ENCODE measurements at regions of chr6 and their contacts with region 1.

Region 1: DNA sequence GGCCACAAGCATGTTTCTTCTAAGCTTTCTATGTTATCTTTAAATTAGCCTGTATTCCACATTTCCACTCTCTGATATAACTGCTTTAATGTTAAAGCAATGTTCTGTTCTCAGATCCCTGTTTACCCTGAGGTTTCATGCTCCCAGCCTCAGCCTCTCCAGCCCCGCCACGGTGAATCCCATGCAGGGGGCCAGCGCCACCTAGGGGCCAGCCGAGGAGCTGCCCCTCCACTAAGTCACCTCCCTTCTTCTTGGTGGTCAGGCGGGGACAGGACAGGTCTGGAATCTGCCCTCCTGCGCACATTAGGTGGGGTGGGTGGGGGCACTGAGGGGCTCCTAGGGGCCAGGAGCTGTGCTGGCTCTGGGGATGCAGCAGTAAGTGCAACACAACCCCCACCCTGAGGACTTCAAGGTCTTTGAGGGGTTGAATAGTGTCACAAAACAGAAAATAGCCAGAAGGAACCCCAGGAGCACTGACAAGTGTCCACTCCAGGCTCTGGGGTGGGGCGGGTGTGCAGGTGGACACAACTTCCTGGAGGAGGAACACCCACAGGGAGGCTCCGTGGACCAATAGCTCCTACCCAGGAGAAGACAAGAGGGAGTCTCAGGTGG is 61.6 kb downstream of the RAB44 start:
- DNase-seq: peak; percentile 39 to 88 (median 63)
- ATAC-seq: peak; percentile 67
- H3K4me3 ChIP-seq: no peak overlapping the region
- H3K4me3 Mint-ChIP-seq: no peak overlapping the region
- H3K27ac ChIP-seq: no peak overlapping the region
- H3K27ac Mint-ChIP-seq: peak overlapping the region in 3 of 9 donors; percentile 3 to 43 (median 25)
- H3K4me1 ChIP-seq: peaks cover 16 to 36% of the 10 kb centered on the region in 2 donors
- H3K4me1 Mint-ChIP-seq: peaks cover 17 to 51% (median 33%) of the 10 kb centered on the region in 7 donors
- H3K27me3 ChIP-seq: no peaks in the 10 kb centered on the region
- H3K27me3 Mint-ChIP-seq: peaks cover 0 to 2% (median 0%) of the 10 kb centered on the region in 5 donors

Region 2: DNA sequence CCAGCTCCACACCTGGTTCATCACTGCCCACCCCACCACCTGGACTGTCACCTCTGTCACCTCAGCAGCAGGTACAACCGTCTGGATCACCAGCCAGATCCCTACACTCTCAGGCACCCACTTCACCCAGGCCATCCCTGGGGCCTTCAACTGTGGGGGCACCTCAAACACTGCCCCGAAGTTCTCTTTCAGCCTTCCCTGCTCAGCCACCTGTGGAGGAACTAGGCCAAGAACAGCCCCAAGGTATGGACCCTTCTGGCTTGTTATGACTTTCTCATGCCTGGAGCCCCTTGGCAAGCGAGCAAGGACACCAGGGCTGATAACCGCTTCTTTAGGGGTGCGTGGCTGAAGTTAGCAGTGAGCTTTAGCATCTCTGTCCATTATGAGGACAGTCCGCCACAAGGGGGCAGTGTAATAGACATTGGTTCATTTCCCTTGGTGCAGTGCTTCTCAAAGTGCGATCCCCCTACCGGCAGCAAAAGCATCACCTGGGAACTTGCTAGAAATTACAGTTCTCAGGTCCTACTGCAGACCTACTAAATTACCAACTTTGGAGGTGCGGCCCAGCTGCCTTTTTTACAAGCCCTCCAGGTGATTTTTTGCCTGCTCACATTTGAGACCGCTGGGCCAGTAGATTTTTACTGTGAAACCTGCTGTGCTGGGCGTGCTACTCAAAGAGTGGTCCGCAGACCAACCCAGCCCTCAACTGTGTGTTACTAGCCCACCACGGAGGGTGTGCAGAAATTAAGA is 456.9 kb before region 1 on chr6:
- CTCF ChIA-PET with region 1: no interaction called
- POLR2A ChIA-PET with region 1: no interaction called
- intact Hi-C with region 1: loop called in 1 of 2 experiments (anchors 2 kb)
- DNase-seq: peak; percentile 74 to 92 (median 88)
- ATAC-seq: peak; percentile 100
- H3K4me3 ChIP-seq: no peak overlapping the region
- H3K4me3 Mint-ChIP-seq: no peak overlapping the region
- H3K27ac ChIP-seq: no peak overlapping the region
- H3K27ac Mint-ChIP-seq: peak overlapping the region in 4 of 9 donors; percentile 29 to 59 (median 48)
- H3K4me1 ChIP-seq: no peaks in the 10 kb centered on the region
- H3K4me1 Mint-ChIP-seq: peaks cover 0 to 8% (median 6%) of the 10 kb centered on the region in 7 donors
- H3K27me3 ChIP-seq: no peaks in the 10 kb centered on the region
- H3K27me3 Mint-ChIP-seq: peaks cover 0 to 29% (median 5%) of the 10 kb centered on the region in 5 donors

Region 3: DNA sequence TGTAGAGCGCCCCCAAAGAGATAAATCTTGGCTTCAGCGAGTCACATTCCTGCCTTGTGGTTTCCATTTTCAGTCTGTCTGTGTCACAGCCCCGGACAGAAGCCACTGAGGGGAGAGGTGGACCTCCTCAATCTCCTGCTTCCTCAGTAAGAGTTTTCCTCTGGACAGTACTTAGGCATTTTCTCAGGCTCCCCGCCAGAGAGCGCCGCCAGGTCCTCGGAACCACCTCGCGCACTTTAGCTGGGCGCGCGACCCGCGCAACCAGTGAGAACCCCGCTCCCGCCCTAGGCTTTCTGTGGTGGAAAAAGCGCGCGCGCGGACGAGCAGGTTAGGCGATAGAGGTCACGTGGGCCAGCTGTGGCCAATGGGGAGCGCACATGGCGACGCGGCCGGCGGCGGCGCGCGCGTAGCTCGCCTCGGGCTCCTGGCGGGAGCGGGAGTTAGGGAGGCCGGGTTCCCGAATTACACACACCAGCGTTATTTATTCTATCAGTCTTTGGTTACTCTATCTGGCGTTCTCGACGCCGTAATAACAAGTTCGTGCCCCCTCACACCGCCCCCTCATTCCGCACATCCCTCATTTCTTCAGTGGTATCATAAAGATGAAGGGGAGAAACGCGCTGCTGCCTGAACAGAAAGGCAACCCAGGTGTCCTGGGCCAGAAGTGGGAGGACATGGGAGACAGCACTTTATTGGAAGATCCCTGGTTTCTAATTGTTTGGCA is 336.0 kb before region 1 on chr6:
- CTCF ChIA-PET with region 1: interaction called, 3 read pairs
- POLR2A ChIA-PET with region 1: no interaction called
- intact Hi-C with region 1: loop called (anchors 1 kb)
- DNase-seq: peak; percentile 94 to 98 (median 97)
- ATAC-seq: peak; percentile 99
- H3K4me3 ChIP-seq: peak overlapping the region; percentile 70
- H3K4me3 Mint-ChIP-seq: peak overlapping the region; percentile 85 to 96 (median 94)
- H3K27ac ChIP-seq: peak overlapping the region; percentile 75
- H3K27ac Mint-ChIP-seq: peak overlapping the region; percentile 84 to 97 (median 93)
- H3K4me1 ChIP-seq: peaks cover 0 to 10% of the 10 kb centered on the region in 2 donors
- H3K4me1 Mint-ChIP-seq: peaks cover 10 to 21% (median 18%) of the 10 kb centered on the region in 7 donors
- H3K27me3 ChIP-seq: no peaks in the 10 kb centered on the region
- H3K27me3 Mint-ChIP-seq: no peaks in the 10 kb centered on the region

Region 4: DNA sequence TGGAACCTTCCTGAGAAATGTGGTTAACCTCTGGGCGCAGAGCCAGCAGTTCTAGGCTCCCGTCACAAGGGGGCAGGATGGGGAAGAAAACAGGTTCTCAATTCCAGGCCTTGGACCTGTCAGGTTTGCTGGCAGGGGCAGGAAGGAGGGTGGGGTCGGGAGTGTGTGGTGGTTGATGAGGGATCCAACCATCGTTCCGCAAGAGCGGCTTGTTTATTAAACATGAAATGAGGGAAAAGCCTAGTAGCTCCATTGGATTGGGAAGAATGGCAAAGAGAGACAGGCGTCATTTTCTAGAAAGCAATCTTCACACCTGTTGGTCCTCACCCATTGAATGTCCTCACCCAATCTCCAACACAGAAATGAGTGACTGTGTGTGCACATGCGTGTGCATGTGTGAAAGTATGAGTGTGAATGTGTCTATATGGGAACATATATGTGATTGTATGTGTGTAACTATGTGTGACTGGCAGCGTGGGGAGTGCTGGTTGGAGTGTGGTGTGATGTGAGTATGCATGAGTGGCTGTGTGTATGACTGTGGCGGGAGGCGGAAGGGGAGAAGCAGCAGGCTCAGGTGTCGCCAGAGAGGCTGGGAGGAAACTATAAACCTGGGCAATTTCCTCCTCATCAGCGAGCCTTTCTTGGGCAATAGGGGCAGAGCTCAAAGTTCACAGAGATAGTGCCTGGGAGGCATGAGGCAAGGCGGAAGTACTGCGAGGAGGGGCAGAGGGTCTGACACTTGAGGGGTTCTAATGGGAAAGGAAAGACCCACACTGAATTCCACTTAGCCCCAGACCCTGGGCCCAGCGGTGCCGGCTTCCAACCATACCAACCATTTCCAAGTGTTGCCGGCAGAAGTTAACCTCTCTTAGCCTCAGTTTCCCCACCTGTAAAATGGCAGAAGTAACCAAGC is 135.5 kb before region 1 on chr6:
- CTCF ChIA-PET with region 1: no interaction called
- POLR2A ChIA-PET with region 1: no interaction called
- intact Hi-C with region 1: loop called (anchors 1 kb)
- DNase-seq: peak; percentile 51 to 76 (median 69)
- ATAC-seq: peak; percentile 86
- H3K4me3 ChIP-seq: no peak overlapping the region
- H3K4me3 Mint-ChIP-seq: no peak overlapping the region
- H3K27ac ChIP-seq: no peak overlapping the region
- H3K27ac Mint-ChIP-seq: peak overlapping the region in 4 of 9 donors; percentile 3 to 64 (median 26)
- H3K4me1 ChIP-seq: peaks cover 3 to 6% of the 10 kb centered on the region in 2 donors
- H3K4me1 Mint-ChIP-seq: peaks cover 8 to 36% (median 10%) of the 10 kb centered on the region in 7 donors
- H3K27me3 ChIP-seq: no peaks in the 10 kb centered on the region
- H3K27me3 Mint-ChIP-seq: peaks cover 0 to 3% (median 0%) of the 10 kb centered on the region in 5 donors

Region 5: DNA sequence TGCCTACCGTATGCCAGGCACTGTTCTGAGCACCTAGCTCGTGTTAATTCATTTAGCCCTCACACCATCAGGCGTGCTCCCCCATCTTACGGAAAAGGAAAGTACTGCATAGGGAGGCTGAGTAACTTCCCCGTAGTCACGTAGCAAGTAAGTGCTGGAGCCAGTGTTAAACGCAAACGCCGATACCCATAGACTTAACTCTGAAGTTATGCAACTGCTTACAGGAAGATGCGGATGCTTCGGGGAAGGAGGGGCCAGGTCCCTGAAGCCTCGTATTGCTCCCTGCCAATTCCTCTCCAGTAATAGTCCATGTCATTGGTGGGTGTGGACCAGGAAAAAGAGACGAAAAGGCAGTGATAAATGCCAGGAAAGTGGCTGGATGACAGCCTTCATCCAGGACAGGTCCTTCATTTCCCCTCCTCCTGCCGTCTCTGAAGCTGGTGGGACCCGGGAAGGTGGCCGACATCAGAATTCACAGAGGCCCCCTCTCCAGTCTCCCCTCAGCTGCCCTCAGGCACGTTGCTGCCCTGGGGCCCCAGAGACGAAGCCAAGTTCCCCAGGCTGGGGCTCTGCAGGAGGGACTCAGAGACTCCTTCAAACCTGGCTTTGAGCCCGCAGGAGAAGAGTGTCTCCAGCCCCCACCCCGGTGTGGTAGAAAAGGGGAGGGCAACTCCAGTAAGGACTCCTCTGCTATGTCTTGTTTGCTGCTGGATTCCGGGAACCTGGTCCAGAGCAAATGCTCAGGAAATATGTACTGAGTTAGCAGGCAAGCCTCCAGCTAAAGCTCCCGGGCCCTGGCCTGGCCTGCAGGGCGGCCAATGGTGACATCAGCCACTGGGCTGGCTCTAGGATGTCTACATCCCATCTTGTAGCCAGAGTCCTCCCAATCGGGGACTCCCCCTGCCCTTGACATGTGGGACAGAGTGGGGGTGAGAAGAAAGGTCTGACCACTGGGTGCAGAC is 23.9 kb before region 1 on chr6:
- CTCF ChIA-PET with region 1: interaction called, 5 read pairs
- POLR2A ChIA-PET with region 1: no interaction called
- intact Hi-C with region 1: loop called in 1 of 2 experiments (anchors 2 kb)
- DNase-seq: peak in 5 of 9 donors; percentile 11 to 39 (median 15)
- ATAC-seq: peak; percentile 93
- H3K4me3 ChIP-seq: no peak overlapping the region
- H3K4me3 Mint-ChIP-seq: peak overlapping the region; percentile 29 to 79 (median 58)
- H3K27ac ChIP-seq: no peak overlapping the region
- H3K27ac Mint-ChIP-seq: peak overlapping the region in 5 of 9 donors; percentile 15 to 85 (median 59)
- H3K4me1 ChIP-seq: peaks cover 0 to 5% of the 10 kb centered on the region in 2 donors
- H3K4me1 Mint-ChIP-seq: peaks cover 0 to 34% (median 7%) of the 10 kb centered on the region in 7 donors
- H3K27me3 ChIP-seq: no peaks in the 10 kb centered on the region
- H3K27me3 Mint-ChIP-seq: peaks cover 0 to 4% (median 0%) of the 10 kb centered on the region in 5 donors

Measured in naive thymus-derived CD4-positive, alpha-beta T cell (primary cell).